Colonic mucosa (tissue), 4 donors: ENCODE measurements at regions of chr19 and their contacts with region 1.

Region 1: GRCh38 chr19:53849237-53849676 is 18.4 kb upstream of the MYADM start:
- DNase-seq: no peak
- H3K4me3 ChIP-seq: no peak overlapping the region
- H3K27ac ChIP-seq: no peak overlapping the region
- H3K4me1 ChIP-seq: no peaks in the 10 kb centered on the region
- H3K27me3 ChIP-seq: no peaks in the 10 kb centered on the region
- CTCF ChIP-seq: no peak

Region 2: GRCh38 chr19:53431399-53432087 is 417.7 kb before region 1 on chr19 and contains the start of gene ZNF761:
- intact Hi-C with region 1: no loop called
- DNase-seq: peak; percentile 99
- H3K4me3 ChIP-seq: peak within 1 kb of the TSS; percentile 74
- H3K27ac ChIP-seq: peak within 1 kb of the TSS; percentile 66
- H3K4me1 ChIP-seq: no peaks in the 10 kb centered on the region
- H3K27me3 ChIP-seq: no peaks in the 10 kb centered on the region
- CTCF ChIP-seq: no peak
- total RNA-seq, gene ZNF761: 5.6 to 10.1 TPM

Region 3: GRCh38 chr19:53879140-53880081 is 30.2 kb after region 1 on chr19:
- intact Hi-C with region 1: loop called (anchors 5 kb)
- DNase-seq: peak; percentile 91
- H3K4me3 ChIP-seq: peak overlapping the region; percentile 60
- H3K27ac ChIP-seq: no peak overlapping the region
- H3K4me1 ChIP-seq: peaks cover 6% of the 10 kb centered on the region
- H3K27me3 ChIP-seq: peaks cover 31% of the 10 kb centered on the region
- CTCF ChIP-seq: no peak

Region 4: DNA sequence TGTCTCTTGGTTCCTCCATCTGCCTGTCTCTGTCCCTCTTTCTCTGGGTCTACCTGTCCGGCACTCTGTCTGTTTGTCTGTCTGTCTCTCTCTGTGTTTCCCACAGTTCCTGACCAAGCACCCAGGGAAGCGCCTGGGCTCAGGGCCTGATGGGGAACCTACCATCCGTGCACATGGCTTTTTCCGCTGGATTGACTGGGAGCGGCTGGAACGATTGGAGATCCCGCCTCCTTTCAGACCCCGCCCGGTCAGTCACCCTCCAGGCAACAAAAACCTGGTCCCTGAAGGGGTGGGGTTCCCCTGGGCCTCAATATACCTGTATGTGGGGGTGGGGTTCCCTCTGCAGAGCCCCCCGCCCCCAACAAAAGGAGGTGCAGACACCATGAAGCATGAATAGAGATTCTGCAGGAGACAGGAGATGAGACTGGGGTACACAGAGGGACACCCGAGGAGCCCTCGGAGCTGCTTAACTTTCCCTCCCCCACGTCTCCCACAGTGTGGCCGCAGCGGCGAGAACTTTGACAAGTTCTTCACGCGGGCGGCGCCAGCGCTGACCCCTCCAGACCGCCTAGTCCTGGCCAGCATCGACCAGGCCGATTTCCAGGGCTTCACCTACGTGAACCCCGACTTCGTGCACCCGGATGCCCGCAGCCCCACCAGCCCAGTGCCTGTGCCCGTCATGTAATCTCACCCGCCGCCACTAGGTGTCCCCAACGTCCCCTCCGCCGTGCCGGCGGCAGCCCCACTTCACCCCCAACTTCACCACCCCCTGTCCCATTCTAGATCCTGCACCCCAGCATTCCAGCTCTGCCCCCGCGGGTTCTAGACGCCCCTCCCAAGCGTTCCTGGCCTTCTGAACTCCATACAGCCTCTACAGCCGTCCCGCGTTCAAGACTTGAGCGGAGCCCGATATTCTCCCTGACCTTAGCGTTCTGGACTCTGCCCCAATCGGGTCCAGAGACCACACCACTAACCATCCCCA is 57.2 kb after region 1 on chr19:
- intact Hi-C with region 1: loop called (anchors 10 kb)
- DNase-seq: peak; percentile 45
- H3K4me3 ChIP-seq: no peak overlapping the region
- H3K27ac ChIP-seq: no peak overlapping the region
- H3K4me1 ChIP-seq: no peaks in the 10 kb centered on the region
- H3K27me3 ChIP-seq: peaks cover 32% of the 10 kb centered on the region
- CTCF ChIP-seq: peak; percentile 79

Region 5: GRCh38 chr19:54023191-54023590 is 173.9 kb after region 1 on chr19:
- intact Hi-C with region 1: loop called (anchors 5 kb)
- DNase-seq: no peak
- H3K4me3 ChIP-seq: no peak overlapping the region
- H3K27ac ChIP-seq: no peak overlapping the region
- H3K4me1 ChIP-seq: no peaks in the 10 kb centered on the region
- H3K27me3 ChIP-seq: no peaks in the 10 kb centered on the region
- CTCF ChIP-seq: no peak

Region 6: DNA sequence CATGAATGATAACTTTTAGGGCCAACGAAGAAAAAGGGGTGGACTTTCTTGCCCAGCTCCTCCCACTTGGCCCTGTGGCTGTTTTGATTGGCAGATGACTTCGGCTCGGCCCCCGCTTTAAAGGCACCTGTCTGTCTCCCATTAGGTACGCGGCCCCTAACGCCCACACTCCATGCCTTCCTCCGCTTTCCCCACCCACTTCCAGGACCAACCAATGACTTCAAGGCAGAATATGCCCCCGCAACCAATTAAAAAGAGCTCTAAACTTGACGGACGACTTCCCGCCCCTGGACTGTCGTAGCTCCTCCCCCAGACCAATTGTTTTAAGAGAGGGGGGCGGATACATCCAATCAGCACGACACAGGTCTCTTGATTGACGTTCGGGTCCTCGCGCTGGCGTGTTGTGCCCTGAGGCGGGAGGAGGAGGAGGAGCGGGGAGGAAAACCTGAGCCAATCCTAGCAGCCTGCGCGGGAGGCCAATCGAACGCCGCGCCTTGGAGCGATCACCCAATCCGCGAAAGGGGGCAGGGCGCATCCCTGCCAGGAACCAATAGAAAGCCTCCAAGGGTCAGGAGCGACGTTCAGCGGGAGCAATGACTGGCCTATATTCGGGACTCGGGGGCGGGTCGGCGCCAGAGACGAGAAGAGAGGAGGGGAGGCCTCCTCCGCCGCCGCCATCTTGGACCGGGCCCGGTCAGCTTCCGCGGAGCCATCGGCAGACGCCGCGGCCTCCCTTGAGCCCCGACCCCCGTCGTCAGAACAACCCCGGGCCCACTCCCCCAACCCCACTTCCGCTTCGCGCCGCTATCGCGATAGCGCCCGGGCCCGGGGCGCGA is 288.0 kb after region 1 on chr19 and contains the start of gene CNOT3:
- intact Hi-C with region 1: no loop called
- DNase-seq: peak; percentile 99
- H3K4me3 ChIP-seq: peak within 1 kb of the TSS; percentile 98
- H3K27ac ChIP-seq: peak within 1 kb of the TSS; percentile 83
- H3K4me1 ChIP-seq: peaks cover 16% of the 10 kb centered on the region
- H3K27me3 ChIP-seq: no peaks in the 10 kb centered on the region
- CTCF ChIP-seq: no peak
- total RNA-seq, gene CNOT3: 38.4 to 57.3 TPM